GM10248 (cell line): ENCODE measurements at regions of chr2 and their contacts with region 1.

Region 1: GRCh38 chr2:20661067-20661980 is 5.6 kb upstream of the GDF7 start:
- DNase-seq: peak; percentile 80
- CTCF ChIP-seq: peak; percentile 94

Region 2: DNA sequence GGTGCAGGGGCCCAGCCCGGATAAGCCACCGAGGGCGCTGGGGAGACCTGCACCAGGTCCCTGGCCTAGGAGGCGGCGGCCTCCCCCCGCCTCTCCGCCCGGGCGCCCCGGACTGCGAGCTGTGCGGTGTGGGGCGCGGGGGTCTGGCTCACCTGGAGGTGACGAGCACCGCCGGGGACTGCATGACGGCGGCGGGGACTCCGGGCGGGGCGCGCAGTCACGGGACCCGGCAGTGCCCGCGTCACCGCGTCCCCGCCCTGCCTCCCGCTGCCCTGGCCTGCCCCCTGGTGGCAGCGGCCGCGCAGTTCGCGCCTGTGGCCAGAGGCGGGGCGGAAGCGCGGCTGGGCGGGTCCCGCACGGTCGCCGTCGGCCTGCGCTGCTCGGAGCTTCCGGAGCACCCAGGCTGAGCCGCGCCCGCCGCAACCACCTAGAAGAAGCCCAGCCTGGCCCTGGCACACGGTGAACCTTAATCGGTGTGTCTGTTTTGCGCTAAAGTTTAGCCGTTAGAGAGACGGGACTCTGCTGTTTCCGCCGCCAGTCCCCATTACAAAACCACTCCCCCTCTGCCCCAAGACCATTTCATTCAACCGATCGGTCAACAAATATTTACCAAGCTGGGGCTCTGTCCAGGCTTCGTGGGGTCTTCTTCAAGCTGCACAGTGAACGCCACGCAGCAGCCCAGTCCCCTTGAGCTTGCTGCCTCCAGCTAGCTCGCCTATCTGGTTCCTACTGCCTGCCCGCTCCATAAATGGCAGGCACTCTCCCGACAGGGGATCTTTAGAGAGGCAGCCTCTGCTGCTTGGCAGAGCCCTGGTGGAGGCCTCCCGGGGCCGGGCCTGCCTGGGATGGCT is 10.2 kb before region 1 on chr2 and contains the start of gene HS1BP3:
- CTCF ChIA-PET with region 1: interaction called, 91 read pairs
- POLR2A ChIA-PET with region 1: no interaction called
- DNase-seq: peak; percentile 98
- CTCF ChIP-seq: peak; percentile 99

Region 3: DNA sequence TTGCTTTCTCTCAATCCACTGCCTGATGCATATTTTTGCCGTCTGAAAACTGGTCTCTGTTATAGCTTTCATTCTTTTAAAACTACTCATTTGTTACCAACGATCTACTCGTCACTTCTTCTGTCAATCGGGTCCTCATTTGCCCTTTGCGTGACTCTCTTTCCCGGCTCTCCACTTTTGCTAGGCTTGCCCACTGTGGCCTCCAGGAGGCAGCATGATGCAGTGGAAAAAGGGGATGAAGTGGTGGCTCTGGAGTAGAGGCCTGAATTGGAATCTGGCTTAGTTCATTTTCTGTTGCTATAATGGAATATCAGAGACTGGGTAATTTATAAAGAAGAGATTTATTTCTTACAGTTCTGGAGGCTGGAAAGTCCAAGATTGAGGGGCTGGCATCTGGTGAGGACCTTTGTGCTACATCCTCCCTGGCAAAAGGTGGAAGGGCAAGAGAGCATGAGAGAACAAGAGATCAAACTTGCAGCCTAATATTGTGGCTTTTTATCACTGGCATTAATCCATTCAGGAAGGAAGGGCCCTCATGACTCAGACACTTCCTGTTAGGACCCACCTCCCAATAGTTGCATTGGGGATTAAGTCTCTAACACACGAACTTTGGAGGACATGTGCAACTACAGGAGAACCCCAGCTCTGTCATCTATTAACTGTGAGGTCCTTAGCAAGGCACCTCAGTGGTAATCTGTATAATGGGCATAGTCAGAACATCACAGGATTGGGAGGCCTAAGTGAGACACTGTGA is 21.0 kb after region 1 on chr2:
- CTCF ChIA-PET with region 1: interaction called, 135 read pairs
- POLR2A ChIA-PET with region 1: no interaction called
- DNase-seq: no peak
- CTCF ChIP-seq: peak; percentile 35

Region 4: DNA sequence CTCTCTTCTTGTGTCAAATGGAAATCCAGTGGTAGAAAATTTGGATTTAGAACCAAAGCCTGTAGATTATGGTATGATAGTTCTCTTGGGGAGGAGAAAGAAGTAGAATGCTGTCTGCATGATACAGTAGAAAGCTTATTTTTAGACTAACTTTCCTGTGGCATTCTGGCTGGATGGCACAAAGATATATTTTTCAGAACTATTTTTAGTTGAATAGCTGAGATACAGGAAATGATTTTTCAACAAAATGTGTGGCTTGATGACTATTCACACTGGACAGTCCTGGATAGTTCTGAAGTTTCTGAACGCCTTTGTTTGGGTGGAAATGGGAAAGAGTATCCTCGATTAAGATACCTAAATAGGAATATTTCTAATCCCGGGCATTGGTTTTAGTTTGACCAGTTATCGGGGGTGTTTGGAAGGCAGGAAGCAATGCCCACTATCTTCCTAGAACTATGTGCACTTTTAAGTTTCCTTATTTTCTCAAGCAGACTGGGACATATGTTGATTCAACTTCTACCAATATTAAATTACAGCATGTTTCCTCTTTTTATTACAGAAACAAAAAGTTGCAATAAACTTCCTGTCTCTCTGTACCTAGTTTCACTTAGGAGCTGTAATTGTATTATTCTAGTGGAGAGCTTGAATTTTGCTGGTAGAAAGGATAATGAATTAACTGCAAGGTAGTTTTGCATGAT is 37.7 kb after region 1 on chr2:
- CTCF ChIA-PET with region 1: interaction called, 21 read pairs
- POLR2A ChIA-PET with region 1: no interaction called
- DNase-seq: no peak
- CTCF ChIP-seq: no peak

Region 5: GRCh38 chr2:20955277-20956026 is 294.1 kb after region 1 on chr2:
- CTCF ChIA-PET with region 1: interaction called, 247 read pairs
- POLR2A ChIA-PET with region 1: no interaction called
- DNase-seq: no peak
- CTCF ChIP-seq: no peak

Region 6: GRCh38 chr2:21118302-21118920 is 457.1 kb after region 1 on chr2:
- CTCF ChIA-PET with region 1: interaction called, 13 read pairs
- POLR2A ChIA-PET with region 1: no interaction called
- DNase-seq: peak; percentile 28
- CTCF ChIP-seq: peak; percentile 41